Heart left ventricle (tissue), 16 donors: ENCODE measurements at regions of chrX and their contacts with region 1.

Region 1: DNA sequence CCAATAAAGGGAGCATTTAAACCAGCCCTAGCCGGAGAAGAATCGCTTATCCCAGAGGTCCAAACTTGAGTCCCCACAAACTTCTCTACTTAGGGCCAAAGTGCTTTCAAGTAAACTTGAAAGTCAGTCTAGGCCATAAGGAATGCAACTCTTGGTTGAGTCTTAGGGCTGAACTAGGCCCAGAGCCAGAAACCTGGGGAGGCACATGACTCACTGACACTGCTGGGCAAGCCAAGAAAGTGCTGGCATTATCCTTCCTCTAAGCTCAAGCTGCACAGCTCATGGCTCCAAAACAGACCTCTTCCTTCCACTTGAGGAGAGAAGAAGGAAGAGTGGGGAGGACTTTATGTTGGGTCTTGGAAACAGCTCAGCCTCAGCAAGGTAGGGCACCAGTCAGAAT is 1257.3 kb upstream of the DIAPH2 start:
- DNase-seq: no peak
- ATAC-seq: no peak
- H3K4me3 ChIP-seq: no peak overlapping the region
- H3K27ac ChIP-seq: no peak overlapping the region
- H3K4me1 ChIP-seq: no peaks in the 10 kb centered on the region
- H3K27me3 ChIP-seq: no peaks in the 10 kb centered on the region
- CTCF ChIP-seq: no peak
- POLR2A ChIP-seq: no peak

Region 2: DNA sequence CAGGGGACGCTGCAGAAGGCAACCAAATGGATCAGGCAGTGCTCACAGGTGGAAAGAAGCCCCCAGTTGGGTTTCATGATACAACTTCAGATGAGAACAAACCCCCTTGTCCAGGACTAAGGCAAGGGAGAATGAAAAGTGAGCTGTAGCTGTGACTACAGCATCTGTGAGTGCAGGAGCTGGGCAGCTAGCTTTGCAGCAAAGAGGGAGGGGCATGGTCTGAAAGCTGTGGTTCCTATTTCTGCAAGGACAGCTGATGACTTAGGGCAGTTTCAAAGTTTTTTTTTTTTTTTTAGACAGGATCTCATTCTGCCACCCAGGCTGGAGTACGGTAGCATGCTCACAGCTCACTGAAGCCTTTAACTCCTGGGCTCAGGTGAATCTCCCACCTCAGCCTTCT is 60.1 kb before region 1 on chrX:
- intact Hi-C with region 1: loop called in 1 of 10 experiments (anchors 10 kb)
- DNase-seq: no peak
- ATAC-seq: no peak
- H3K4me3 ChIP-seq: no peak overlapping the region
- H3K27ac ChIP-seq: no peak overlapping the region
- H3K4me1 ChIP-seq: no peaks in the 10 kb centered on the region
- H3K27me3 ChIP-seq: no peaks in the 10 kb centered on the region
- CTCF ChIP-seq: no peak
- POLR2A ChIP-seq: no peak

Region 3: GRCh38 chrX:95484781-95485180 is 57.4 kb after region 1 on chrX:
- intact Hi-C with region 1: no loop called
- DNase-seq: no peak
- ATAC-seq: no peak
- H3K4me3 ChIP-seq: no peak overlapping the region
- H3K27ac ChIP-seq: no peak overlapping the region
- H3K4me1 ChIP-seq: no peaks in the 10 kb centered on the region
- H3K27me3 ChIP-seq: no peaks in the 10 kb centered on the region
- CTCF ChIP-seq: no peak
- POLR2A ChIP-seq: no peak